Right ventricle myocardium inferior (tissue), 1 donor: ENCODE measurements at regions of chr22 and their contacts with region 1.

Region 1: GRCh38 chr22:50612528-50613221 is 12.1 kb downstream of the MAPK8IP2 start:
- DNase-seq: no peak
- ATAC-seq: no peak

Region 2: GRCh38 chr22:50244420-50245213 is 368.1 kb before region 1 on chr22 and contains the start of gene TUBGCP6:
- intact Hi-C with region 1: loop called (anchors 10 kb)
- DNase-seq: peak; percentile 99
- ATAC-seq: peak; percentile 94
- total RNA-seq, gene TUBGCP6: 17.5 TPM

Region 3: DNA sequence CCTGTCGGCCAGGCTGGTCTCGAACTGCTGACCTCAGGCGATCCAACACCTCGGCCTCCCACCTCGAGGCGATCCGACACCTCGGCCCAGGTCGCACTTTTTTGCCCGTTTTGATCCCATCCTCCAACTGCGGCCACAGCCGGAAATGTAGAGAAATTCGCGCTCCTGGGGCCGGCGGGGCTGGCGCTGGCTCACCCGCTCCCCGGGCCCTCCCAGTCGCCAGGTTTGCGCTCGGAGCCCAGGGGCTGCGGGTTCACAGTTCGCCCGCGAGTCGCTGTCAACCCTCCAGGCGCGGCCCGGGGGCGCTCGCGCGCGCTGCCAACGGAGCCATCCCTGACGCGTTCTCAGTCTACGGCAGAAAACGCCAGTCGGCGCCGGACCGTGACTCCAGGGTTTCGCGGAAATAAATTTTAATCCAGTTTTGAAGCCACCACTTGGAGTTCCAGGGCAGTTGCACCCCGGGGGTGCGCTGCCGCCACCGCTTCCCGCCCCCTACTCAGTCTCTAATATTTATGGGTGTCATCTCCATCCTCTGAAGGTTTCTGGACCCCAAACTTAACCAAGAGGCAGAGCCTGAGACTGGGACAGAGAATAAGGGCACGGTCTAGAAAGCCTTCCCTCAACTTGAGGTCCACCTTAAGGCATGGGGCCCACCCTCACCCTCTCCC is 68.5 kb before region 1 on chr22:
- intact Hi-C with region 1: loop called (anchors 5 kb)
- DNase-seq: peak; percentile 91
- ATAC-seq: peak; percentile 66

Region 4: DNA sequence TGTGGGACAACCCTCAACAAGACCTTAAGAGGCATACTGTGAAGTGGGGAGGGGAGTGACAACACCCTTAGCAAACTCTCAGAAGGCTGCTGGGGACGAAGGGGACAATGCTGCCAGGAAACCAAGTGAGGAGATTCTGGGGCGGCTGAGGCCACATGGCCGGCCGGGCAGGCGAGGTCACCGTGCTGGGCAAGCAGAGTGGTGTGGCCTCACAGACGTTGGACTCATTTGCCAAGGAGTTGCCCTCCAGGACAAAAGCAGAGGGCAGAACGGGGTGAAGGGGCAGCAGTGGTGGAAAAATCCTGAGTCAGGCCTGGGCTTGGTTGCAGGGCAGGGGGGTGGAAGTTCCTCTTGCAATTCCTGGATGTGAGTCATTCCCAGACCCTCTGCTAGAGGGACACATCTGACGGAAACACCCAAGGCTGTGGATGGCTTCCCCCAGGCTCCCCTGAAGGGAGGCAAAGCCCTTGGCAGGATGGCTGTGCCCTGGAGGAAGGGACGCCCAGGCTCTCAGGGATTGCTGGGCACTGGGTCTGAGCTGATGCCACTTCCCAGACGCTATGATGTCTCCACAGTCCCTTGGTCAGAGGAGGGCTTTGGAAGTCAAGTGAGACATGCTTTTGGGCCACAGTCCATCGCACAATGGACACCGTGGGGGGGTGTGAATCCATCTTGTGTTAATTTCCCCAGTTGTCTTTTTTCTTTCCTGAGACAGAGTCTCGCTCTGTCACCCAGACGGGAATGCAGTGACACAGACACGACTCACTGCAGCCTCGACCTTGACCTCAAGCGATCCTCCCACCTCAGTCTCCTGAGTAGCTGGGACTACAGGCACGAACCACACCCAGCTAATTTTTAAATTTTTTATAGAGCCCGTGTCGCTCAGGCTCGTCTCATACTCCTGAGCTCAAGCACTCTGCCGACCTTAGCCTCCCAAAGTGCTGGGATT is 43.7 kb after region 1 on chr22:
- intact Hi-C with region 1: no loop called
- DNase-seq: no peak
- ATAC-seq: peak; percentile 52